ENCODE measurements at regions of chr2 and their contacts with region 1.

Region 1: DNA sequence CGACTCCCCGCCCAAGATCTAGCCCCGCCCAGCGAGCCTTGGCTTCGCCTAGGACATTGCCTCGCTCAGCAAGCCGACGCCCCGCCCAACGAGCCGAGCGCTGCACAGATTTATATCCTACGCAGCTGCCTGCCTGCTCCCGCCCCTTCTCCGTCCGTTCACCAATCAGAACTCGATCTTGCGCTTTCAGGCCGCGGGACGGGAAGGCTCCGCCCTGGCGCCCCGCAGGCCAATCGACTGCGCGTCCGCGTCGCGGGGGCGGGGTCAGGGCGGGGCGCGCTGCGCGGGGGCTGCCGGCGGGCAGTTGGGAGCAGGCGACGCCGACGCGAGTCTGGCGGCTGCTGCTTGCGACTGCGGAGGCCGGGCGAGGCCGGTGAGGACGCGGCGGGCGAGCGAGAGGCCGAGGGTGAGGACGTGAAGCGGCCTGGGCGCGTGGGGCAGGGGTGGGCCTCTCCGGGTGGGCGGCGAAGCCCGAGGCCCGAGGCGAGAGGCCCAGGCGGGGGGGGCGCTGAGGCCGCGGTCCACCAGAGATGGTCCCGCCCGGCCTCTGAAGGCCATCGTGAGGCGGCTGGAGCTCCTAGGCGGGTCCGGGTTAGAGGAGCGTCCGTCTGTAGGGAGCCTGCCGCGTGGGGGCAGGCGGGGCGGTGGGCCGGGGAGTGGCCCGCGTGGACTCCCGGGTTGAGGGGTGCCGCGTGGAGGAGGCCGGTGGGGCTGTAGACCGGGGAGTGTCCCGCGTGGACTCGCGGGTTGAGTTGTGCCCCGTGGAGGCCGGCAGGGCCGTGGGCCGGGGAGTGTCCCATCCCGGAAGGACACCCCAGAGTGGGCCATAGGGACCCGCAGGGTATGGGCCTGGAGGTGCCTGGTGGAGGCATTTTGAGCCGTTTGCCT is at the start of gene FARP2:
- DNase-seq: peak; percentile 93 to 99
- ATAC-seq: peak; percentile 92 to 97 (median 92)
- H3K4me3 ChIP-seq: peak within 1 kb of the TSS; percentile 54
- H3K4me3 Mint-ChIP-seq: peak within 1 kb of the TSS; percentile 84
- H3K27ac ChIP-seq: peak within 1 kb of the TSS; percentile 66
- H3K27ac Mint-ChIP-seq: peak within 1 kb of the TSS; percentile 79 to 85
- H3K4me1 ChIP-seq: peaks cover 16% of the 10 kb centered on the region
- H3K4me1 Mint-ChIP-seq: peaks cover 7 to 26% of the 10 kb centered on the region in 2 donors
- H3K27me3 ChIP-seq: no peaks in the 10 kb centered on the region
- H3K27me3 Mint-ChIP-seq: no peaks in the 10 kb centered on the region
- CTCF ChIP-seq: no peak
- total RNA-seq, gene FARP2: 26.8 to 40.6 (median 31.6) TPM

Region 2: DNA sequence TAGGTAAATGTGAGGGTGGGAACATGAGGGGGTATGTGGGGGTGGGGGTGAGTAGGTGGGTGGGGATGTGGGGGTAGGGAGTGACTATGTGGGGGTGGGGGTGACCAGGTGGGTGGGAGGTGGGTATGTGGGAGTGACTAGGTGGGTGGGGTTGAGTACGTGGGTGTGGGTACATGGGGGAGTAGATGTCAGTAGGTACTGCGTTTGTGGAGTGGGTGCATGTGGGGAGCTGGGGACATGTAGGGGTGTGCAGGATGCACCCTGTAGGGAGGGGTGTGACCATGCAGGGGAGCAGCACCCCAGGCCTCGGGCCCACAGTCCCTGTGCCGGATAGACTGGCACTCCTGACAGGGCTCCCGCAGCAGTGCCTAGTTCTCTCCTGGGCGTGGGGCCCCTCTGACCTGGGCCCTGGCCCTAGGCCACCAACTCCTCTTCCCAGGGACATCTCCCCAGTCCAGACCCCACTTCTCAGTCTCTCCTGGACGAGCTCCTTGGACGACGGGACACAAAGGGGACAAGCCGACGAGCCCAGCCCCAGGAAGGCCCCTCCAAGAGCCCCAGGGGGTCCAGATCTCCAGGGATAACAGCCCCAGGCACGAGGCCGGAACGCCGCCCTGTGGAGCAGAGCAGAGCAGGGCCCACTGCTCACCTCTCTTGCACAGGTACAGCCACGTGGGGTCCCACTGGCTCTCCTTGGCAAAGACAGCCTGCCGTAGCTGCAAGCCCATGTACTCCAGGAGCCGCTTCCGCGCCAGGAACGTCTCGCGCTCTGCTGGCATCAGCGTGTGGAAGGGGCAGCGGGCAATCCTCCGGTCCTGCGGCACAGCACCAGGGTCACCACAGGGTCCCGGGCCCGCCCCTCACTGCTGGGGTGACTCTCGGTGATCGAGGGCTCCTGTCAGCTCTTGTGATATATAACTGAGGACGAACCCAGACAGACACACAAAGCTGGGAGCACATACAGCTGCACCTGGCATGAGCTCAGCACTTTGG is 856.6 kb before region 1 on chr2:
- intact Hi-C with region 1: no loop called
- DNase-seq: peak in 1 of 2 donors; percentile 13
- ATAC-seq: no peak
- H3K4me3 ChIP-seq: no peak overlapping the region
- H3K4me3 Mint-ChIP-seq: no peak overlapping the region
- H3K27ac ChIP-seq: no peak overlapping the region
- H3K27ac Mint-ChIP-seq: no peak overlapping the region
- H3K4me1 ChIP-seq: no peaks in the 10 kb centered on the region
- H3K4me1 Mint-ChIP-seq: no peaks in the 10 kb centered on the region
- H3K27me3 ChIP-seq: no peaks in the 10 kb centered on the region
- H3K27me3 Mint-ChIP-seq: no peaks in the 10 kb centered on the region
- CTCF ChIP-seq: no peak

Region 3: DNA sequence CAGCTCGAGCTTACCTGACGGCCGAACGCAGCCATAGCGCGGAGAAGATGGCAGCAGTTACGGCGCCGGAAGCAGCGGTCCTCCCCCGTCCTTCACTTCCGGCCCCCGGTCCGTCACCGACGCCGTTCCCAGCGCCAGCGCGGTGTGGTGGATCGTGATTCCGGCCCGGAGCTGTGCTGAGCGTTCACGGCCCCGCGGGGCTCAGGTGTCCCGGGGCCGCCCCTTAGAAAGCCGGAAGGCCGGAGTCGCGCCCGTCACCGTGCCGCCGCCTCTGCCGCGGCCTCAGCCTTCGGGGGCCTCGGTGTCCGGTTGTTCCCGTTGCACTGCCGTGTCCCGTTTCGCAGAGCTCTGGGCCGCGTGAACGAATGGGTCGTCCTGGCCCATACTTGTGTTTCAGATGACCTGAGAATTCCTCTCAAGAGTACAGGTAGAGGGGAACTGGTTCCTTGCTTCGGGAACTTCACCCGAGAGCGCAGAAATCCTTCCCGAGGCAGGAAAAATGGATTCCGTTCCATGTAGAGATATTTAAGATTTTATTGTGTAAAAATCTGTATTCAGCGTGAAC is 253.9 kb before region 1 on chr2 and contains the start of gene MTERF4:
- intact Hi-C with region 1: no loop called
- DNase-seq: peak; percentile 84 to 95
- ATAC-seq: peak; percentile 96 to 97 (median 96)
- H3K4me3 ChIP-seq: peak within 1 kb of the TSS; percentile 73
- H3K4me3 Mint-ChIP-seq: peak within 1 kb of the TSS; percentile 96
- H3K27ac ChIP-seq: peak within 1 kb of the TSS; percentile 85
- H3K27ac Mint-ChIP-seq: peak within 1 kb of the TSS; percentile 90 to 93
- H3K4me1 ChIP-seq: peaks cover 18% of the 10 kb centered on the region
- H3K4me1 Mint-ChIP-seq: peaks cover 17 to 42% of the 10 kb centered on the region in 2 donors
- H3K27me3 ChIP-seq: no peaks in the 10 kb centered on the region
- H3K27me3 Mint-ChIP-seq: no peaks in the 10 kb centered on the region
- CTCF ChIP-seq: no peak
- total RNA-seq, gene MTERF4: 38.9 to 45.5 (median 39.2) TPM

Region 4: DNA sequence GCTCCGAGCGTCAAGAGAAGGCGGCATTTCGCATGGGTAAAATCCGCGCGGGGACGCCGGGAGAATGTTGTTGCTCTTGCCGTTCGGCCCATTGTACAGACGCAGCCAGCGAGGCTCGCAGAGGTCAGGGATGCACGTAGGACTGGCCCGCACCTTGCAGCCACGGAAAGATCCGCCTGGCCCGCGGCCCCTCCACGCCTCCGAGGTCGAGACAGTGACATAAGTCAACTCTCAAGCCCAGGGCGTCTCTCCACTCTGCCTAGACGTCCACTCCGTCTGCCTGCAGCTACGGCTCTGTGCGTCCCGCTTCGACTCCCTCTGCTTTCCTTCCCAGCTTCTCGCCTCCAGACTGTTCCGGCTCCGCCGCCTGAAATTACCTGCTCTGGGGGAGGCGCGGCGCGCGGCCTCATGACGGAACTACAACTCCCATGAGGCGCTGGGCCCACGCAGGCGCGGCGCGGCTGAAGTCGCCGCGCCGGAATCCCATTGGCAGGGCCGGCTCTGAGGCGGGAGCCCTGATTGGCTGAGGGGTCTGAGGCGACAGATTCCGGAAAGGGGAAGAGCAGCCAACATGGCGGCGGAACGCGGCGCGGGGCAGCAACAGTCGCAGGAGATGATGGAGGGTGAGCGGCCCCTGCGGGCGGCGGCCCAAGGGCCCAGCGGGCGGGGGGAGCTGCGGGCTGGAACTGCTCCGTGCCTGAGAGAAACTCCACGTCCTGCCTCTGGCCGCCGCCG is 206.1 kb before region 1 on chr2 and contains the start of gene PPP1R7:
- intact Hi-C with region 1: loop called (anchors 5 kb)
- DNase-seq: peak; percentile 89 to 97
- ATAC-seq: peak; percentile 83 to 89 (median 83)
- H3K4me3 ChIP-seq: peak within 1 kb of the TSS; percentile 78
- H3K4me3 Mint-ChIP-seq: peak within 1 kb of the TSS; percentile 95
- H3K27ac ChIP-seq: peak within 1 kb of the TSS; percentile 6
- H3K27ac Mint-ChIP-seq: peak within 1 kb of the TSS; percentile 89 to 90
- H3K4me1 ChIP-seq: peaks cover 14% of the 10 kb centered on the region
- H3K4me1 Mint-ChIP-seq: peaks cover 34 to 42% of the 10 kb centered on the region in 2 donors
- H3K27me3 ChIP-seq: no peaks in the 10 kb centered on the region
- H3K27me3 Mint-ChIP-seq: no peaks in the 10 kb centered on the region
- CTCF ChIP-seq: no peak
- total RNA-seq, gene PPP1R7: 57.8 to 66.3 (median 60.4) TPM

Region 5: DNA sequence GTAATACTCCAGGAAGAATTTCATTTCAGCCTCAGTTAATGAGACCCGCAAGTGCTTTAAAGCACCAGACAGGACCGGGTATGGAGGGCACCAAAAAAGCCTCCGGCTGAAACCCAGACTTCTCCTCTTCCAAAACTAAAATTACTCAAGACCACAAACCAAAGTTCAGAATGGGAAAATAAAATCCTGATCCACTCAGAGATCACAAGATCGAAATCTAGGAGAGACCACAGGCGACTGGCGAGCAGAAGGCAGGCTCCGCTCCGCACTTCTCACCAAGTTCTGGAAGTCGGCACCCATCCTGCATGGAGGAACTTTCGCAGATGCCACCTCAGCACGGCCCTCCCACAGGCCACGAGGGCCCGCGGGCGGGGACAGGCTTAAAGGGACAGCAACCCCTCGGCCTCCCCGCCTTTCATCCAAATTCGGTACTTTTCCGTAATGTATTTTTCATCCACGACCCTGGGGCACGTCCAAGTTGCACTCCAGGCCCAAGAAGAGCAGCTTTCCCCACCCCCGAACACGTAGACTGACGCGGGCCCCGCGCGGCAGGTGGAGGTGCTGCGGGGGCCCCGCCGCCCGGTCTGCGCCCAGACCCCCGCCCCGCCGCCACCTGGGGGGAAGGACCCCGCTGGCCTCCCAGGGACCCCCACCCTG is 84.5 kb before region 1 on chr2:
- intact Hi-C with region 1: loop called (anchors 5 kb)
- DNase-seq: peak; percentile 55 to 73
- ATAC-seq: peak; percentile 77 to 78 (median 77)
- H3K4me3 ChIP-seq: peak overlapping the region; percentile 66
- H3K4me3 Mint-ChIP-seq: peak overlapping the region; percentile 95
- H3K27ac ChIP-seq: peak overlapping the region; percentile 42
- H3K27ac Mint-ChIP-seq: peak overlapping the region; percentile 86
- H3K4me1 ChIP-seq: peaks cover 28% of the 10 kb centered on the region
- H3K4me1 Mint-ChIP-seq: peaks cover 50 to 51% of the 10 kb centered on the region in 2 donors
- H3K27me3 ChIP-seq: no peaks in the 10 kb centered on the region
- H3K27me3 Mint-ChIP-seq: no peaks in the 10 kb centered on the region
- CTCF ChIP-seq: no peak

Region 6: GRCh38 chr2:241609859-241610793 is 253.9 kb after region 1 on chr2:
- intact Hi-C with region 1: loop called (anchors 5 kb)
- DNase-seq: peak; percentile 89 to 94
- ATAC-seq: peak; percentile 96 to 99 (median 97)
- H3K4me3 ChIP-seq: peak overlapping the region; percentile 37
- H3K4me3 Mint-ChIP-seq: peak overlapping the region; percentile 90
- H3K27ac ChIP-seq: peak overlapping the region; percentile 62
- H3K27ac Mint-ChIP-seq: peak overlapping the region; percentile 76 to 92
- H3K4me1 ChIP-seq: peaks cover 24% of the 10 kb centered on the region
- H3K4me1 Mint-ChIP-seq: peaks cover 17 to 20% of the 10 kb centered on the region in 2 donors
- H3K27me3 ChIP-seq: no peaks in the 10 kb centered on the region
- H3K27me3 Mint-ChIP-seq: no peaks in the 10 kb centered on the region
- CTCF ChIP-seq: peak; percentile 70

Measured in natural killer cell (primary cell).